Left cardiac atrium (tissue), 4 donors: ENCODE measurements at regions of chr10 and their contacts with region 1.

Region 1: DNA sequence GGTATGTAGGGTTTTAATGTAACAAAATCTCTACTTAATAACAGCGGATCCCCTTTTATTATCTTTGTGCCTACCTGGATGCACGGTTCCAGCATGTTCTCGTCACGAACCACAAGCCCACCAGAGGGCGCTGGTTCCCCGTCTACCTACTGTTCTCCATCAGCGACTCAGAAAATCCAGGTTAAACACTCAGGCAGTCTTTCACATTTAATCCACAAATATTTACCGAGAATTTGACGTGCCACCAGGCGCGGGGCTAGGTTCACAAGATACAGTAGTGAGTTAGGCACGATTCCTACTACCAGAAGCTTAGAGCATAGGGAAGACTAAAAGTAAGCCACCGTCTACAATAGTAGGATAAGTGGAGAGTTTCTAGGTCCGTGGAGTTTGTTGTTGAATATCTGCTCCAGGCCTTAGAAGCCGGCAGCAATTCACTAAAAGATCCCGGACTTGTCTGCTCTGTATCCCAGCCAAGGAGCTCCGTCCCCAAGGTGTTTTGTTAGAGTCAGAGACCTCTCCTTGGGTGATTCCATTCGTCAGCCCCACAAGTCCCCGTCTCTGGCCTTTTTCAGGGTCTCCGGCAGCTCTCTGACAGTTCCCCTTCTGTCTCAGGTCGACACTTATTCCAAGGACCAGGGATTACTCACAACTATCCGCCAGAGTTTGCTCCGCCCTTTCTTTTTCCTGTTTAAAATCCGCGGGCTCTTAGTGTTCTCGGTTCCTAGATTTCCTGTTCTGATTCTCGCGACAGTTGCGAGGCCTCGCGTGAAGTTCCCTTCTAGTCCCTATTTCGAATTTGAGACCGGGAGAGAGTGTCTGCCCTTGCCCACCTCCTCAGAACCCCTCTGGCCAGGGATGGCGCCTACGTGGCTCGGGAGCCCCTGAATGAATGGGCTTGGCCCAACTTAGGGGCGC is 1.5 kb upstream of the KAZALD1 start:
- DNase-seq: peak; percentile 95
- ATAC-seq: peak; percentile 67 to 76

Region 2: DNA sequence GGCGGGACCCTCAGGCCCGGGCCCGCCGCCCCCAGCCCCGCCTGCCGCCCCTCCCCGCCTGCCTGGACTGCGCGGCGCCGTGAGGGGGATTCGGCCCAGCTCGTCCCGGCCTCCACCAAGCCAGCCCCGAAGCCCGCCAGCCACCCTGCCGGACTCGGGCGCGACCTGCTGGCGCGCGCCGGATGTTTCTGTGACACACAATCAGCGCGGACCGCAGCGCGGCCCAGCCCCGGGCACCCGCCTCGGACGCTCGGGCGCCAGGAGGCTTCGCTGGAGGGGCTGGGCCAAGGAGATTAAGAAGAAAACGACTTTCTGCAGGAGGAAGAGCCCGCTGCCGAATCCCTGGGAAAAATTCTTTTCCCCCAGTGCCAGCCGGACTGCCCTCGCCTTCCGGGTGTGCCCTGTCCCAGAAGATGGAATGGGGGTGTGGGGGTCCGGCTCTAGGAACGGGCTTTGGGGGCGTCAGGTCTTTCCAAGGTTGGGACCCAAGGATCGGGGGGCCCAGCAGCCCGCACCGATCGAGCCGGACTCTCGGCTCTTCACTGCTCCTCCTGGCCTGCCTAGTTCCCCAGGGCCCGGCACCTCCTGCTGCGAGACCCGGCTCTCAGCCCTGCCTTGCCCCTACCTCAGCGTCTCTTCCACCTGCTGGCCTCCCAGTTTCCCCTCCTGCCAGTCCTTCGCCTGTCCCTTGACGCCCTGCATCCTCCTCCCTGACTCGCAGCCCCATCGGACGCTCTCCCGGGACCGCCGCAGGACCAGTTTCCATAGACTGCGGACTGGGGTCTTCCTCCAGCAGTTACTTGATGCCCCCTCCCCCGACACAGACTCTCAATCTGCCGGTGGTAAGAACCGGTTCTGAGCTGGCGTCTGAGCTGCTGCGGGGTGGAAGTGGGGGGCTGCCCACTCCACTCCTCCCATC is 232.2 kb before region 1 on chr10:
- intact Hi-C with region 1: no loop called
- DNase-seq: peak; percentile 40
- ATAC-seq: peak; percentile 63 to 65

Region 3: GRCh38 chr10:101042667-101043355 is 17.5 kb before region 1 on chr10:
- intact Hi-C with region 1: loop called in 1 of 2 experiments (anchors 2 kb)
- DNase-seq: peak; percentile 98
- ATAC-seq: peak; percentile 95

Region 4: DNA sequence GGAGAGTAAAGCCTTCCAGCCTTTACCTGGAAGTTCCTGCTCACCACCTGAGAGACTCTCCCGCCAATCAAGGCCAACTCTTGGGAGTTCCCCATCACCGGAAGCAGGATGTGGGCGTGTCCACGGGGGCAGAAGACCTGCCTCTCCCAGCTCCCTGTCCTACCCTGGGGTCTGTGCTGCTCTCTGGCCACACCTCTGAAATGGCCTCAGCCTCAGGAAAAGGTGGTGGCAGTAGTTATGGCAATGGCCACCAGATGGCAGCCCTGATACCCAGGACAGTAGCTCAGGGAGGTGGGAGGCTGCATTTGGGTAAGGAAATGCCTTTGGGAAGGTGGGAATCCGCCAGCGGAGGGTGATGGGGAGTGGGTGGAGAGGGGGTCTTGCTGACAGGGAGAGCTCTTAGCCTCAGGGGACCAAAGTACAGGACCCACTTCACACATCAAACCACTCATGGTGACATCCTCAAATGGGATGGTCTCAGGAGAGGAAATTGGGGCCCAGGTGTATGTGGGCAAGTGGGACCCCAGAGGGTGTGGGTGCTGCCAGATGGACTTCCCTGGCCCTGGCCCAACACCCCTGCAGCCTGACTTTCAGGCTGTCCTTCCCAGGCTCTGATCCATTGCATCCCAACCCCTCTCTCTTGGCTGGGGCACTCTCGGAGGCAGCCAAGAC is 35.4 kb after region 1 on chr10:
- intact Hi-C with region 1: no loop called
- DNase-seq: peak; percentile 68
- ATAC-seq: peak; percentile 70 to 84